ENCODE measurements at regions of chr17 and their contacts with region 1.

Region 1: DNA sequence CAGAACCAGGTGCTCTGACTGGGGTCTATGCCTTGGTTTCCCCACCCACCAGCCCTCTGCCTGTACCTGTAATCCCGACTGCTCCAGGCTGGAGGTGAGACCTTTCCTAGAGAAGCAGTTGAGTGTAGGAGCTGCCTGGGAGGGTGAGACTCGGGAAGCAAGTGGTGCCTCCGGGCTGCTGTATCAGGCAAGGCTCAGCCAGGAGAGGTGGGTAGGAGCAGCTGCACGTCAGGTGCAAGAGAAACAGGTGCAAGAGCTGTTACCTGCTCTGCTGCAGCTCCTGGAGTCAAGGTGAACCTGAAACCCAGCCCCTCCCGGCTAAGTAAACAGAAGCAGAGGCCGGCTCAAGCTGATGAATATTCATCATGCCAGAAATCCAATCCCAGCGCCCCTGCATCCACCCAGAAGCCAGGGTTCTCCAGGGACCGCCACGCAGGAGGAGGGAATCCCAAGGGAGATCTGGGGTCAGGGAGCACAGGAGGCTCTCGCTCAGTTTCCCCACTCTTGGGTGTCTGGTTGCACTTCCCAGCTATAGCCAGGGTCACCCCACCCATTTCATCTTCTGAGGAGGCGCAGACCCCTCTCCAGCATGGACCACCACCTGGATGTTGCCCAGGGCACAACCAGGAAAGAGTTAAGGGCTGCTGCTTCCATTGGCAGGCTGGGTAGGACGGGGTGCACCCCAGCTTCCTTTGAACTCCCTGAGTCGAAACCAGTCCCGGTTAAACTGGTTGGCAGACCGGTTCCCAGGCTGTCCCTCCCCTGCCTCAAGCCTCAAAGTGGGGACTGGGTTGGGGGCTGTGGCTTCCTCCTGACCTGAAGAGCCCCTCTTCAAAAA is at the start of gene PRR15L:
- DNase-seq: peak; percentile 87
- H3K4me3 Mint-ChIP-seq: peak within 1 kb of the TSS; percentile 76
- H3K27ac Mint-ChIP-seq: peak within 1 kb of the TSS; percentile 69
- H3K4me1 Mint-ChIP-seq: peaks cover 82% of the 10 kb centered on the region
- H3K27me3 Mint-ChIP-seq: no peaks in the 10 kb centered on the region
- CTCF ChIP-seq: no peak
- total RNA-seq, gene PRR15L: 30.2 and 49.1 TPM in 2 replicates

Region 2: GRCh38 chr17:47970704-47971463 is 13.1 kb after region 1 on chr17 and contains the start of gene CDK5RAP3:
- CTCF ChIA-PET with region 1: interaction called, 33 read pairs
- intact Hi-C with region 1: no loop called
- DNase-seq: peak; percentile 100
- H3K4me3 Mint-ChIP-seq: peak within 1 kb of the TSS; percentile 94
- H3K27ac Mint-ChIP-seq: peak within 1 kb of the TSS; percentile 19
- H3K4me1 Mint-ChIP-seq: peaks cover 32% of the 10 kb centered on the region
- H3K27me3 Mint-ChIP-seq: no peaks in the 10 kb centered on the region
- CTCF ChIP-seq: peak; percentile 100
- total RNA-seq, gene CDK5RAP3: 431 and 457 TPM in 2 replicates